CD8-positive, alpha-beta T cell (primary cell): ENCODE measurements at regions of chr15 and their contacts with region 1.

Region 1: GRCh38 chr15:72783563-72784237 is at the start of gene ADPGK:
- DNase-seq: peak; percentile 92 to 99 (median 96)
- ATAC-seq: peak; percentile 80
- H3K4me3 ChIP-seq: peak within 1 kb of the TSS; percentile 90 to 91
- H3K4me3 Mint-ChIP-seq: peak within 1 kb of the TSS; percentile 96
- H3K27ac ChIP-seq: peak within 1 kb of the TSS; percentile 93 to 95
- H3K27ac Mint-ChIP-seq: peak within 1 kb of the TSS; percentile 97
- H3K4me1 ChIP-seq: peaks cover 43% of the 10 kb centered on the region
- H3K4me1 Mint-ChIP-seq: peaks cover 50% of the 10 kb centered on the region
- H3K27me3 ChIP-seq: no peaks in the 10 kb centered on the region
- H3K27me3 Mint-ChIP-seq: no peaks in the 10 kb centered on the region
- CTCF ChIP-seq: no peak
- total RNA-seq, gene ADPGK: 113 to 120 TPM

Region 2: GRCh38 chr15:72117486-72118399 is 666.0 kb before region 1 on chr15 and contains the start of gene MYO9A:
- CTCF ChIA-PET with region 1: no interaction called
- POLR2A ChIA-PET with region 1: no interaction called
- intact Hi-C with region 1: loop called (anchors 1 to 2 kb)
- DNase-seq: peak; percentile 97 to 100 (median 99)
- ATAC-seq: peak; percentile 80
- H3K4me3 ChIP-seq: peak within 1 kb of the TSS; percentile 78 to 93
- H3K4me3 Mint-ChIP-seq: peak within 1 kb of the TSS; percentile 99
- H3K27ac ChIP-seq: peak within 1 kb of the TSS; percentile 95 to 97
- H3K27ac Mint-ChIP-seq: peak within 1 kb of the TSS; percentile 99
- H3K4me1 ChIP-seq: peaks cover 18% of the 10 kb centered on the region
- H3K4me1 Mint-ChIP-seq: peaks cover 45% of the 10 kb centered on the region
- H3K27me3 ChIP-seq: no peaks in the 10 kb centered on the region
- H3K27me3 Mint-ChIP-seq: no peaks in the 10 kb centered on the region
- CTCF ChIP-seq: no peak
- total RNA-seq, gene MYO9A: 15.1 to 20.0 TPM

Region 3: GRCh38 chr15:72473614-72474465 is 309.9 kb before region 1 on chr15 and contains the start of gene ARIH1:
- CTCF ChIA-PET with region 1: no interaction called
- POLR2A ChIA-PET with region 1: no interaction called
- intact Hi-C with region 1: loop called (anchors 1 to 2 kb)
- DNase-seq: peak; percentile 95 to 99 (median 96)
- ATAC-seq: peak; percentile 72
- H3K4me3 ChIP-seq: peak within 1 kb of the TSS; percentile 93 to 100
- H3K4me3 Mint-ChIP-seq: peak within 1 kb of the TSS; percentile 97
- H3K27ac ChIP-seq: peak within 1 kb of the TSS; percentile 100
- H3K27ac Mint-ChIP-seq: peak within 1 kb of the TSS; percentile 99
- H3K4me1 ChIP-seq: peaks cover 46% of the 10 kb centered on the region
- H3K4me1 Mint-ChIP-seq: peaks cover 50% of the 10 kb centered on the region
- H3K27me3 ChIP-seq: no peaks in the 10 kb centered on the region
- H3K27me3 Mint-ChIP-seq: no peaks in the 10 kb centered on the region
- CTCF ChIP-seq: peak; percentile 42
- total RNA-seq, gene ARIH1: 343 to 351 TPM

Region 4: DNA sequence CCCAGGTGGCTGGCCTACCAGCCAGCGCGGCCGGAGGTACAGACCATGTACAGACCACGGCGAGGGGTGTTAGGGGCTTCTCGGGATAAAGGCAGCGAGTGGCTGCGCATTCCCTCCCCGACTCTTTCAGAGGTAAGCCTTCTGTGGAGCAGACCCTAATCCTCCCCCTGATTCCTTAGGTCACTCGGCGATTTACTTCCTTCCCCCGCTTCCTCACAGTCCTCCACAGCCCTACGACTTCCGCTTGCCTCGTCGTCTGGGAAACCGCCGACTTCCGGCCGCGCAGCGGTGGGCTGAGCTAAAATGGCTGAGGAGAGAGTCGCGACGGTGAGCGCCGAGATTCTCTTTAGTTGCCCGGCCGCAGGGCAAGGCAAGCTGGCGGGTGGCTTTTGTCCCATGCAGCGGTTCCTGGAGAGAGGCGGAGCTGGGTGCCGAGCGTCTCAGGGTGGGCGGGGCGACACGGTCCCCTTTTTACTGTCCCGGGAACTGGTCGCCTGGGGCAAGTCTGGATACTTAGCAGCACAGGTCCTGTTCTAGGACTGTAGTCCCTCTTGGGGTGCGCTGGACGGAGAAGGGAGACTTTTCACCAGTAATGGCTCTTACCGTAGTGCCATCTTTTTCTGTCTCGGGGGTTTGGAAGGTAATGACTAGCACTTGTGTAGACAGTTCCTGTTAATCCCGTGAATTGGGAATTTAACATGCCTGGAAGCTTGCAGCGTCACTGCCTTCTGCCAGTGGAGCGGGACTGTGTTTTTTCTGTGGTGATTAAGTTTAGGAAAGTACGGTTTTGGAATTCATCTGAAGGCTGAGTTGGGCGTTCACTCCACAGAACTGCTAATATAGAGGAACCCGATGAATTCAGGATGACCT is 97.5 kb before region 1 on chr15 and contains the starts of genes BBS4 and HIGD2B:
- CTCF ChIA-PET with region 1: no interaction called
- POLR2A ChIA-PET with region 1: interaction called, 5 read pairs
- intact Hi-C with region 1: loop called (anchors 1 kb)
- DNase-seq: peak; percentile 68 to 93 (median 86)
- ATAC-seq: peak; percentile 92
- H3K4me3 ChIP-seq: peak within 1 kb of the TSS; percentile 73 to 87
- H3K4me3 Mint-ChIP-seq: peak within 1 kb of the TSS; percentile 97
- H3K27ac ChIP-seq: peak within 1 kb of the TSS; percentile 86 to 90
- H3K27ac Mint-ChIP-seq: peak within 1 kb of the TSS; percentile 96
- H3K4me1 ChIP-seq: peaks cover 14% of the 10 kb centered on the region
- H3K4me1 Mint-ChIP-seq: peaks cover 18% of the 10 kb centered on the region
- H3K27me3 ChIP-seq: no peaks in the 10 kb centered on the region
- H3K27me3 Mint-ChIP-seq: no peaks in the 10 kb centered on the region
- CTCF ChIP-seq: no peak
- total RNA-seq, gene BBS4: 8.8 to 12.9 TPM
- total RNA-seq, gene HIGD2B: 0.27 TPM in 1 of 2 experiments, not detected in the other

Region 5: DNA sequence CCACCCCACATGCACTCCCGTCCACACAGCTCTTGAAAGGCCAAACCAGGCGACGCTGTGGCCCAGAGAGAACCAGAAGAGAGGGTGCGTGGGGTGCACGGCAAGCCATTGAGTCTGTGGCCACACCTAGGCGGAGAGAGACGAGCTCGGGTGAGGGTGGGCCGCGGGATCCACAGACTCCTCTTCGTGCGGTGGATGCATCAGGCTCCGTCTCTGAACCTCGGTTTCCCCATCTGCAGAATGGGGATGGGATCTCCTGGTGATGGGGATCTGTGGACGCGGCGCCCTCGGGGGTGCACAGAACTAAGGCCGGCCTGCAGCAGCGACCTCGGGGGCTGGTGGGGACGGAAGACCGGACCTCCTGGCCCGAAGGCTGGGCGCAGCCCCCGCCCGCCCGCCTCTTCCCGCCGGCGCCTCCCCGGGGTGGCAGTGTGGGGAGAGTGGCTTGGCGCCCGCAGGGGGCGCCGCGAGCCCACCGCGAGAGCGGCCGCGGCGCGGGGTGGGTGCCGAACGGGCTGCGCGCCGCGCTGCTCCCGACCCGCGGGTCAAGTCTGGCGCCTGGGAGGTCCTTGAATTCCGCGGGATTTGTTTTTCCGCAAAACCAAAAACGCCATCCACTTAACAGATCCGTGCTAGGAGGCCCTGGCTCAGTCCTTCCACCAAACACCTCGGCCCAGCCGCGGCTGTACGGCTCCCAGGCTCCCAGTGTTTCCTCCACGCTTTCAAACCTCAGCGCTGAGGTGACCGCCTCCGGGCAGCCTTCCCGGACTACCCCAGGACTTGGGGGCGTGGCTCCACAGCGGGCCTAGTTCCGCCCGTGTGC is 13.0 kb after region 1 on chr15:
- CTCF ChIA-PET with region 1: interaction called, 6 read pairs
- POLR2A ChIA-PET with region 1: interaction called, 4 read pairs
- intact Hi-C with region 1: loop called in 1 of 2 experiments (anchors 1 kb)
- DNase-seq: peak in 8 of 9 experiments; percentile 19 to 73 (median 43)
- ATAC-seq: peak; percentile 82
- H3K4me3 ChIP-seq: peak overlapping the region; percentile 57 to 63
- H3K4me3 Mint-ChIP-seq: peak overlapping the region; percentile 83
- H3K27ac ChIP-seq: no peak overlapping the region
- H3K27ac Mint-ChIP-seq: no peak overlapping the region
- H3K4me1 ChIP-seq: peaks cover 9% of the 10 kb centered on the region
- H3K4me1 Mint-ChIP-seq: peaks cover 10% of the 10 kb centered on the region
- H3K27me3 ChIP-seq: peaks cover 0 to 2% of the 10 kb centered on the region in 2 experiments
- H3K27me3 Mint-ChIP-seq: peaks cover 45% of the 10 kb centered on the region
- CTCF ChIP-seq: peak; percentile 57

Region 6: GRCh38 chr15:72873379-72874233 is 89.9 kb after region 1 on chr15:
- CTCF ChIA-PET with region 1: no interaction called
- POLR2A ChIA-PET with region 1: no interaction called
- intact Hi-C with region 1: no loop called
- DNase-seq: no peak
- ATAC-seq: no peak
- H3K4me3 ChIP-seq: no peak overlapping the region
- H3K4me3 Mint-ChIP-seq: no peak overlapping the region
- H3K27ac ChIP-seq: no peak overlapping the region
- H3K27ac Mint-ChIP-seq: no peak overlapping the region
- H3K4me1 ChIP-seq: no peaks in the 10 kb centered on the region
- H3K4me1 Mint-ChIP-seq: no peaks in the 10 kb centered on the region
- H3K27me3 ChIP-seq: no peaks in the 10 kb centered on the region
- H3K27me3 Mint-ChIP-seq: peaks cover 13% of the 10 kb centered on the region
- CTCF ChIP-seq: no peak

Region 7: DNA sequence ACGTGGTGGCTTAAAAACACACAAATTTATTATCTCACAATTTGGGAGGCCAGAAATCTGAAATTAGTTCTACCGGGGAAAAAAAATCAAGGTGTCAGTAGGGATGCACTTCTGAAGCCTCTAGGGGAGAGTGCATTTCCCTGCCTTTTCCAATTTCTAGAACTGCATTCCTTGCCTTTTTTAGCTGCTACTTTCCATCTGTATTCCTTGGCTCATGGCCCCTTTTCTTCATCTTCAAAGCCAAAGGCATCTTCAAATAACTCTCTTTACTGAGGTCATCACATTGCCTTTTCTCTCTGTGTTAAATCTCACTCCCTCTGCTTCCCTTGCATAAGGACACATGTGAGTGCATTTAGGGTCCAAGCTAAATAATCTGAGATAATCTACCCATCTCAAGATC is 199.0 kb after region 1 on chr15:
- CTCF ChIA-PET with region 1: no interaction called
- POLR2A ChIA-PET with region 1: no interaction called
- intact Hi-C with region 1: no loop called
- DNase-seq: no peak
- ATAC-seq: no peak
- H3K4me3 ChIP-seq: no peak overlapping the region
- H3K4me3 Mint-ChIP-seq: no peak overlapping the region
- H3K27ac ChIP-seq: no peak overlapping the region
- H3K27ac Mint-ChIP-seq: no peak overlapping the region
- H3K4me1 ChIP-seq: no peaks in the 10 kb centered on the region
- H3K4me1 Mint-ChIP-seq: no peaks in the 10 kb centered on the region
- H3K27me3 ChIP-seq: no peaks in the 10 kb centered on the region
- H3K27me3 Mint-ChIP-seq: peaks cover 25% of the 10 kb centered on the region
- CTCF ChIP-seq: no peak

Region 8: DNA sequence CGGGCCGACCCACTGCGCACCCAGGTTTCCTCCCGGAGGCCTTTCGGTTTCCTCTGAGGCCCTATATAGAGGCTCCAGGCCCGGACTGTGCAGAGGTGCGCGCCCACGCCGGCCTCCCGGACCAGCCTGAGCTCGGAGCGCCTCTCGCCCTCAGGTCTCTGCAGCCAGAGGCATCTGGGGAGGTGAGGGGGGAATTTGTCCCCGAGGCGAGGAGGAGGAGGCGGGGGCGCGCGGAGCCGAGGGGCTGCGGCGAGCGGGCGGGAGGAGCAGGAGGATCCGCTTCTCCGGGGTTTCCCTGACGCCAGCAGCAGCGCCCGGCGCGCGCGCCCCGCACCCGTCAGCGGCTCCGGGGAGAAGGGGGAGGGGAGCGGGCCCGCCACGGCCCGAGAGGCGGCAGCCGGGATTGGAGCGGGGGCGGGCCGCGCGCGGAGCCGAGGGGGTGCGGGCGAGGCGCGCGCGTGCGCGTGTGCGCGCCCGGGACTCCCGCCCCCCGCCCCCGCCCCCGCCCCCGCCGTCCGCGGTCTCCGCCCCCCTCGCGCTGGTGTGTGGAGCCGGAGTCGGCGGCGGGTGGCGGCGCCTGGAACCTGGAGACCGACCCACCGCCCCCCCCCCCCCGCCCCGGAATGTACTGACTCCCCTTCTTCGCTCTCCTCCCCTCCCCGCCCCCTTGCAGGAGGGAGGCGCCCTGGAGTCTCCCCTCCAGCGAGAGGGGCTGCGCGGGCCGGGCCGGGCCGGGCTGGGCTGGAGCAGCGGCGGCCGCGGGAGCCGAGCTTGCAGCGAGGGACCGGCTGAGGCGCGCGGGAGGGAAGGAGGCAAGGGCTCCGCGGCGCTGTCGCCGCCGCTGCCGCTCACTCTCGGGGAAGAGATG is 268.3 kb after region 1 on chr15 and contains the start of gene NEO1:
- CTCF ChIA-PET with region 1: no interaction called
- POLR2A ChIA-PET with region 1: interaction called, 3 read pairs
- intact Hi-C with region 1: loop called (anchors 1 to 2 kb)
- DNase-seq: peak; percentile 52 to 90 (median 78)
- ATAC-seq: peak; percentile 73
- H3K4me3 ChIP-seq: peak within 1 kb of the TSS; percentile 73 to 85
- H3K4me3 Mint-ChIP-seq: peak within 1 kb of the TSS; percentile 82
- H3K27ac ChIP-seq: peak within 1 kb of the TSS; percentile 56
- H3K27ac Mint-ChIP-seq: peak within 1 kb of the TSS; percentile 61
- H3K4me1 ChIP-seq: peaks cover 10% of the 10 kb centered on the region
- H3K4me1 Mint-ChIP-seq: peaks cover 13% of the 10 kb centered on the region
- H3K27me3 ChIP-seq: no peaks in the 10 kb centered on the region
- H3K27me3 Mint-ChIP-seq: peaks cover 21% of the 10 kb centered on the region
- CTCF ChIP-seq: no peak
- total RNA-seq, gene NEO1: 3.0 to 3.3 TPM

Region 9: GRCh38 chr15:73081321-73081958 is 297.7 kb after region 1 on chr15:
- CTCF ChIA-PET with region 1: interaction called, 8 read pairs
- POLR2A ChIA-PET with region 1: no interaction called
- intact Hi-C with region 1: loop called (anchors 1 to 5 kb)
- DNase-seq: peak in 3 of 9 experiments; percentile 14 to 70 (median 64)
- ATAC-seq: no peak
- H3K4me3 ChIP-seq: no peak overlapping the region
- H3K4me3 Mint-ChIP-seq: no peak overlapping the region
- H3K27ac ChIP-seq: no peak overlapping the region
- H3K27ac Mint-ChIP-seq: no peak overlapping the region
- H3K4me1 ChIP-seq: no peaks in the 10 kb centered on the region
- H3K4me1 Mint-ChIP-seq: no peaks in the 10 kb centered on the region
- H3K27me3 ChIP-seq: no peaks in the 10 kb centered on the region
- H3K27me3 Mint-ChIP-seq: peaks cover 3% of the 10 kb centered on the region
- CTCF ChIP-seq: peak; percentile 72